ENCODE measurements at regions of chr1 and their contacts with region 1.

Region 1: GRCh38 chr1:200550367-200550766 is 70.2 kb downstream of the KIF14 start:
- DNase-seq: no peak
- ATAC-seq: peak in 1 of 2 experiments; percentile 43; a peak in 3 of 6 replicates
- H3K4me3 ChIP-seq: no peak overlapping the region
- H3K27ac ChIP-seq: no peak overlapping the region
- H3K4me1 ChIP-seq: peaks cover 14% of the 10 kb centered on the region; the same call in 1 of the 3 replicates
- CTCF ChIP-seq: no peak
- EP300 ChIP-seq: no peak
- POLR2A ChIP-seq: no peak
- RAD21 ChIP-seq: no peak

Region 2: GRCh38 chr1:200172311-200172710 is 378.1 kb before region 1 on chr1:
- CTCF ChIA-PET with region 1: no interaction called
- POLR2A ChIA-PET with region 1: no interaction called
- DNase-seq: no peak
- ATAC-seq: no peak; a peak in 2 of 6 replicates
- H3K4me3 ChIP-seq: no peak overlapping the region
- H3K27ac ChIP-seq: peak overlapping the region in 1 of 2 experiments; percentile 18; a peak in 1 of 6 replicates
- H3K4me1 ChIP-seq: peaks cover 19% of the 10 kb centered on the region
- CTCF ChIP-seq: no peak
- EP300 ChIP-seq: no peak
- POLR2A ChIP-seq: no peak
- RAD21 ChIP-seq: no peak

Region 3: GRCh38 chr1:200428482-200429205 is 121.7 kb before region 1 on chr1:
- CTCF ChIA-PET with region 1: no interaction called
- POLR2A ChIA-PET with region 1: no interaction called
- DNase-seq: no peak
- ATAC-seq: peak in 1 of 2 experiments; percentile 62; a peak in 3 of 6 replicates
- H3K4me3 ChIP-seq: no peak overlapping the region
- H3K27ac ChIP-seq: peak overlapping the region; percentile 50 to 74; a peak in 5 of 6 replicates
- H3K4me1 ChIP-seq: peaks cover 26% of the 10 kb centered on the region
- CTCF ChIP-seq: no peak
- EP300 ChIP-seq: no peak
- POLR2A ChIP-seq: no peak
- RAD21 ChIP-seq: no peak

Region 4: GRCh38 chr1:200530623-200531261 is 19.6 kb before region 1 on chr1:
- CTCF ChIA-PET with region 1: interaction called, 11 read pairs
- POLR2A ChIA-PET with region 1: no interaction called
- DNase-seq: no peak
- ATAC-seq: peak in 1 of 2 experiments; percentile 26; a peak in 1 of 6 replicates
- H3K4me3 ChIP-seq: no peak overlapping the region
- H3K27ac ChIP-seq: no peak overlapping the region
- H3K4me1 ChIP-seq: no peaks in the 10 kb centered on the region
- CTCF ChIP-seq: no peak
- EP300 ChIP-seq: no peak
- POLR2A ChIP-seq: no peak
- RAD21 ChIP-seq: no peak